Activated B cell treated with CpG ODN at 0.5 μM for 24 hours (primary cell): ENCODE measurements at regions of chr18 and their contacts with region 1.

Region 1: GRCh38 chr18:3995476-3996102 is 459.5 kb downstream of the DLGAP1 start:
- DNase-seq: no peak
- ATAC-seq: peak; percentile 40
- H3K4me3 Mint-ChIP-seq: no peak overlapping the region
- H3K27ac Mint-ChIP-seq: no peak overlapping the region
- H3K4me1 Mint-ChIP-seq: no peaks in the 10 kb centered on the region
- H3K27me3 Mint-ChIP-seq: no peaks in the 10 kb centered on the region
- CTCF ChIP-seq: no peak

Region 2: GRCh38 chr18:3703732-3704176 is 291.8 kb before region 1 on chr18:
- CTCF ChIA-PET with region 1: interaction called, 3 read pairs
- POLR2A ChIA-PET with region 1: no interaction called
- intact Hi-C with region 1: loop called (anchors 2 kb)
- DNase-seq: no peak
- ATAC-seq: no peak
- H3K4me3 Mint-ChIP-seq: no peak overlapping the region
- H3K27ac Mint-ChIP-seq: no peak overlapping the region
- H3K4me1 Mint-ChIP-seq: peaks cover 10% of the 10 kb centered on the region
- H3K27me3 Mint-ChIP-seq: peaks cover 25% of the 10 kb centered on the region
- CTCF ChIP-seq: no peak

Region 3: DNA sequence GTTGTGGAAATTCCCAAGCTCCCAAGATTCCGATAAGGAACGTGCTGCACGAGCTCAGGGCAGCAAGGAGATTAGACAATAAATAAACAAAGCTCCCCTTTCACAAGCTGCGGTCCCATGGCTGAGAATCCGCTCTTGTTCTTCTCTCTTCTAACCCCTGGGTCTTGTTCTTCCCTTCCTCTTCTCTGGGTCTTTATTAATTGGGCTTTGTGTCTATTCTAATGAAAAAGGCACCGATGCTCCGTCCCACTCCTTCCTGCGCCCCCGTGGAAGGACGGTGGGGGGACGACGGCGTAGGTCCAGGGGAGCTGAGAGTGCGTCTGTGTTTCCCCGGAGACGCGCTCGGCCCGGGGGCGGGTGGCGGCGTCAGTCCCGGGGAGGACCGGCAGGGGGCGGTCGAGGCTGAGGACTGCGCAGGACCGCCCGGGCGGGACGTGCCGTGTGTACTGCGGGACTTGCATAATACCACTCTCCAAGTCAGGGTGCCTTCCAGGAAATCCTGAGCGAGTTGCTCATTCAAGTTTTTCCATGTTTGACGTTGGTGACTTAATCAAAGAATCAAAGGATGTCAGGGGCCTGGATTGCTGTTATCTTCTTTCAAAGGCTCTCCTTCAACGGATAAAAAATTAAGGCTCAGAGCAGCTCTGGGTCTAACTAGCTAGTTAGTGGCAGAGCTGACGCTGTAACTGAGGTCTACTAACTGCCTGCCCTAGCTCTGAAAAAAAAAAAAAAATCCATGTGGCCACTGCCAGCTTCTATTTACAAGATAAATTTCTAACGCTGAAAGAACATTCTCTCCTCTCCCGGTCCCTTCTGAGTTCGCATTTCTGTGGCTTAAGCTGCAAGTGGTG is 224.2 kb before region 1 on chr18:
- CTCF ChIA-PET with region 1: interaction called, 10 read pairs
- POLR2A ChIA-PET with region 1: no interaction called
- intact Hi-C with region 1: loop called (anchors 1 kb)
- DNase-seq: peak; percentile 52
- ATAC-seq: peak; percentile 86
- H3K4me3 Mint-ChIP-seq: peak overlapping the region; percentile 24
- H3K27ac Mint-ChIP-seq: no peak overlapping the region
- H3K4me1 Mint-ChIP-seq: peaks cover 10% of the 10 kb centered on the region
- H3K27me3 Mint-ChIP-seq: peaks cover 33% of the 10 kb centered on the region
- CTCF ChIP-seq: no peak